Natural killer cell (primary cell): ENCODE measurements at regions of chr12 and their contacts with region 1.

Region 1: DNA sequence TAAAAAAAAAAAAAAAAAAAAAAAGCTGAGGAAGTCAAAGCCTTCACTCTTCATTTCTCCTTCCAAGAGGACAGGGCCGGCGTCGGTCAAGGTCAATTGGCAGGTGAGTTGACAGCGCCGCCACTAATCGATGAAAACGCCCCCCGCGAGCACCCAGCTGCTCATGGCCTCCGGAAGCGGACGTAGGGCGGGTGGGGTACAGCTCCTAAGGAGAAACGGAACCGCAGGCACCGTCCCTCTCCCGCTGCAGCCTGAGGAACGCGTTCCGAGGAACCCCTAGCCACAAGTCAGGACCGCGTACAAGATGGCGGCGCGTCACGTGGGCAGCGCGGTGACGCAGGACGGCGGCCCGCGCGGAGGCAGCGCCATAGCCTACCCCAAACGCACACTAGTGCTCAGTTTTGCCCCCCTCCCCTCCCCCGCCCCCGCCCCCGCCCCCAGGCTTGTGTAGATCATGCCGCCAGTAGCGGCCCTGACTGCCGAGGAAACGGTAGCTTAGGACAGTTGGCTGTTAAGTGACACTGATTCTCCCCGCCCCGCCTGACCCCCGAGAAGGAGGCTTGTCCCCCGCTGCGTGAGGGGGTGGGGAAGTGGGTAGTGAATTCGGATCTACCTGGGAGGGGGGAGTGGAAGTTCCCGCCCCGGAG is at the start of gene ATF1:
- DNase-seq: peak; percentile 91 to 95
- ATAC-seq: peak; percentile 75 to 91 (median 82)
- H3K4me3 ChIP-seq: peak within 1 kb of the TSS; percentile 92
- H3K4me3 Mint-ChIP-seq: peak within 1 kb of the TSS; percentile 97
- H3K27ac ChIP-seq: peak within 1 kb of the TSS; percentile 96
- H3K27ac Mint-ChIP-seq: peak within 1 kb of the TSS; percentile 91 to 93
- H3K4me1 ChIP-seq: peaks cover 17% of the 10 kb centered on the region
- H3K4me1 Mint-ChIP-seq: peaks cover 26 to 37% of the 10 kb centered on the region in 2 donors
- H3K27me3 ChIP-seq: no peaks in the 10 kb centered on the region
- H3K27me3 Mint-ChIP-seq: no peaks in the 10 kb centered on the region
- CTCF ChIP-seq: no peak
- total RNA-seq, gene ATF1: 20.1 to 36.8 (median 23.1) TPM

Region 2: DNA sequence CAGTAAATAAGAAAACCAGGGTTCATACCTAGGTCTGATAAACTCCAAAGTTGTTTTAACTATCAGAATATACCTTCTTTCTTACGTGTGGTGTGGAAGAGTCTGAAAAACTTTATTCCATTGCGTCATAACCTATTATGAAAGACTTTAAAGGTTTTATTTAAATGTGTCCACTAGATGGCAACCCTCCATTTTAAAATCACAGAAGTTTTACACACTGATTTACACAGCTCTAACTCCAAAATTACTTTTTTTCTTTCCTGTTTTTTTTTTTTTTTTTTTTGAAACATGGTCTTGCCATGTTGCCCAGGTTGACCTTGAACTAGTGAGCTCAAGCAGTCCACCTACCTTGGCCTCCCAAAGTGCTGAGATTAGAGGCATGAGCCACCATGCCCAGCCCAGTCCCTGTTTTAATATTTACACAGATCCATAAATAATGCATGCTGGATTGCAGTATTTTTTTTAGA is 61.6 kb after region 1 on chr12:
- intact Hi-C with region 1: loop called (anchors 1 kb)
- DNase-seq: peak in 1 of 2 donors; percentile 79
- ATAC-seq: peak; percentile 74 to 91 (median 87)
- H3K4me3 ChIP-seq: no peak overlapping the region
- H3K4me3 Mint-ChIP-seq: no peak overlapping the region
- H3K27ac ChIP-seq: peak overlapping the region; percentile 32
- H3K27ac Mint-ChIP-seq: peak overlapping the region; percentile 89 to 93
- H3K4me1 ChIP-seq: no peaks in the 10 kb centered on the region
- H3K4me1 Mint-ChIP-seq: peaks cover 6% of the 10 kb centered on the region in 2 donors
- H3K27me3 ChIP-seq: no peaks in the 10 kb centered on the region
- H3K27me3 Mint-ChIP-seq: no peaks in the 10 kb centered on the region
- CTCF ChIP-seq: peak; percentile 71

Region 3: GRCh38 chr12:50924439-50925341 is 160.9 kb after region 1 on chr12:
- intact Hi-C with region 1: loop called (anchors 5 kb)
- DNase-seq: peak; percentile 44 to 63
- ATAC-seq: peak; percentile 91 to 93 (median 91)
- H3K4me3 ChIP-seq: peak overlapping the region; percentile 53
- H3K4me3 Mint-ChIP-seq: peak overlapping the region; percentile 96
- H3K27ac ChIP-seq: peak overlapping the region; percentile 72
- H3K27ac Mint-ChIP-seq: peak overlapping the region; percentile 92 to 95
- H3K4me1 ChIP-seq: peaks cover 32% of the 10 kb centered on the region
- H3K4me1 Mint-ChIP-seq: peaks cover 65 to 69% of the 10 kb centered on the region in 2 donors
- H3K27me3 ChIP-seq: no peaks in the 10 kb centered on the region
- H3K27me3 Mint-ChIP-seq: no peaks in the 10 kb centered on the region
- CTCF ChIP-seq: no peak

Region 4: DNA sequence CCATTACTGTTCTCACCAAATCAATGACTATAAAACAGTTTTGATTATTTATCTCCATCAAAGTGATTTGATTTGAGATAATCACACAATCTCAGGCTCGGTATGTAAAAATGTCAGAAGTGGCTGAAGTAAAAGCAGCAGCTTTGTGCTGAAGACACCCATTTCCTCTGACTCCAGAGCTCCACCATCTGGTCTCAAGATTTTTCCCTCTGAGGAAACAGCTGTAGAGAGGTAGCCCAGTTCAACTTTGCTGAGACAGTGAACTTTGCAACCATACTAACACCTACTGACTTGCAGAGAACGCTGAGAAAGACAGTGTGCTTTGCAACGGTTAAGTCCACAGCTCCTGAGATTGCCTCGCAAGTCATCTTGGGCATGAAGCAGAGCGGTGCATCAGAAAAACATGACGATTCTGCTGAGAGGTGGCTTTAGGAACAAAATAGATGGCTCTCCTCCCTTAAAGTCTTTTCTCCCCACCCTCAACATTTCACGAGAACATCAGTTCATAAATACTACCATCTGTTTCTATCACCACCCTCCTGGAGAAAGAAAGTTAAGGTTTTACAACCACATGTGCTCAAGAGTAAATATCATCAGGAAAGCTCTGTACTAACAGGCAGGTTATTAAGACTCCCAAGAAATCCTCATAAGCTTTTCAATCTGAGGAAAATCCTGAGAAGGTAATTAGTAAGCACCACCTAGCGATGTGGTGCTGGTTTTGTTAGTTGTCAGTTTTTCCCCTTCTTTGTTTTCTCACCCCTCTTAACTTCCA is 223.4 kb after region 1 on chr12:
- intact Hi-C with region 1: loop called (anchors 1 kb)
- DNase-seq: peak in 1 of 2 donors; percentile 65
- ATAC-seq: peak; percentile 64 to 73 (median 69)
- H3K4me3 ChIP-seq: no peak overlapping the region
- H3K4me3 Mint-ChIP-seq: no peak overlapping the region
- H3K27ac ChIP-seq: no peak overlapping the region
- H3K27ac Mint-ChIP-seq: no peak overlapping the region
- H3K4me1 ChIP-seq: no peaks in the 10 kb centered on the region
- H3K4me1 Mint-ChIP-seq: no peaks in the 10 kb centered on the region
- H3K27me3 ChIP-seq: no peaks in the 10 kb centered on the region
- H3K27me3 Mint-ChIP-seq: no peaks in the 10 kb centered on the region
- CTCF ChIP-seq: peak; percentile 49

Region 5: DNA sequence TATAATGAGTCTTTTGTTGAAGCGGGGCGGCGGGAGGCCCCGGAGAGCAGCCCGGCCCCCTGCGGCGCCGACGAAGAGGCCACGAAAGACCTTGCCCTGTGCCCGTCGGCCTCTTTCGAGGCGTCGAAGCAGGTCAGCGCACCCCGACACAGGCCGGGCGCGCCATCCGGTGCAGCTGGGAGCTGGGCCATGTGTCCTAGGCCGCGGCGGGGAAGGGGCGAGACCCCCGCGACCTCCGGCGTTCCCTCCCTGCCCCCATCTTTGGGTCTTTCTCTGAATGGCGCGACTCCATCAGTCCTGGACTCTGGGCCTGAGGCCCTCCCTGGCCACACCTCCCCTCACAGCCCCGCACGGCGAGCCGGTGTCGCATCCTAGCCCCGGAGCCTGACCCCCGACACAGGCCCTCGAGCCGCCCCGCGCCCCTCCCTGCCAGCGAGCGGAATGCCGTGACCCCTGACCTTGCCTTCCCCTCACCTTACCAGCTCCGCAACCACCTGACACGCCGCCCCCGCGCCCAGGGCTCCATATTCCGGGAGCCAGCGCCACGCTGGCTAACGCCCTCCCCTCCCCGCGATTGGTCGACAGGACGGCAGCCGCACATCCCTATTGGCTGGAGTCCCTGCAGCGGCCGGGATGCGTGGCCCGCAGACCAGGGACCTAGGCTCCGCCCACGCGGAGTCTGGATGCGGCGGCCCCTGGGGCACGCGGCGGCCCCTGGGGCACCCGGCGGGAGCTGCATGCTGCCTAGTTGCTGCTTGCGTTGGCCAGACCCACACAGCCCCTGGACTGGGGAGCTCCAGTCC is 262.3 kb after region 1 on chr12 and contains the start of gene SLC11A2:
- intact Hi-C with region 1: loop called (anchors 1 kb)
- DNase-seq: peak; percentile 82 to 95
- ATAC-seq: peak; percentile 94 to 98 (median 95)
- H3K4me3 ChIP-seq: peak within 1 kb of the TSS; percentile 75
- H3K4me3 Mint-ChIP-seq: peak within 1 kb of the TSS; percentile 98
- H3K27ac ChIP-seq: peak within 1 kb of the TSS; percentile 56
- H3K27ac Mint-ChIP-seq: peak within 1 kb of the TSS; percentile 88 to 97
- H3K4me1 ChIP-seq: peaks cover 30% of the 10 kb centered on the region
- H3K4me1 Mint-ChIP-seq: peaks cover 37 to 45% of the 10 kb centered on the region in 2 donors
- H3K27me3 ChIP-seq: no peaks in the 10 kb centered on the region
- H3K27me3 Mint-ChIP-seq: peaks cover 0 to 4% of the 10 kb centered on the region in 2 donors
- CTCF ChIP-seq: no peak
- total RNA-seq, gene SLC11A2: 34.3 to 54.3 (median 42.7) TPM

Region 6: GRCh38 chr12:51351913-51352532 is 588.3 kb after region 1 on chr12:
- intact Hi-C with region 1: loop called (anchors 1 kb)
- DNase-seq: peak; percentile 35 to 79
- ATAC-seq: peak; percentile 64 to 89 (median 74)
- H3K4me3 ChIP-seq: no peak overlapping the region
- H3K4me3 Mint-ChIP-seq: no peak overlapping the region
- H3K27ac ChIP-seq: no peak overlapping the region
- H3K27ac Mint-ChIP-seq: peak overlapping the region in 1 of 2 donors; percentile 51
- H3K4me1 ChIP-seq: no peaks in the 10 kb centered on the region
- H3K4me1 Mint-ChIP-seq: peaks cover 0 to 8% of the 10 kb centered on the region in 2 donors
- H3K27me3 ChIP-seq: no peaks in the 10 kb centered on the region
- H3K27me3 Mint-ChIP-seq: no peaks in the 10 kb centered on the region
- CTCF ChIP-seq: peak; percentile 77